GM12878 (cell line): ENCODE measurements at regions of chr17 and their contacts with region 1.

Region 1: GRCh38 chr17:34420254-34420766 is 57.3 kb upstream of the CCL1 start:
- DNase-seq: peak; percentile 11
- ATAC-seq: peak; percentile 82
- H3K4me3 ChIP-seq: no peak overlapping the region
- H3K27ac ChIP-seq: no peak overlapping the region
- H3K4me1 ChIP-seq: no peaks in the 10 kb centered on the region
- H3K27me3 ChIP-seq: peaks cover 5 to 10% of the 10 kb centered on the region in 2 experiments
- CTCF ChIP-seq: peak; percentile 88 to 94 (median 89)
- EP300 ChIP-seq: no peak
- POLR2A ChIP-seq: no peak
- RAD21 ChIP-seq: peak; percentile 91

Region 2: GRCh38 chr17:34051046-34051445 is 369.3 kb before region 1 on chr17:
- CTCF ChIA-PET with region 1: no interaction called
- POLR2A ChIA-PET with region 1: no interaction called
- RAD21 ChIA-PET with region 1: no interaction called
- SMC1A ChIA-PET with region 1: no interaction called
- in situ Hi-C with region 1: no loop called
- intact Hi-C with region 1: no loop called
- DNase-seq: no peak
- ATAC-seq: no peak
- H3K4me3 ChIP-seq: no peak overlapping the region
- H3K27ac ChIP-seq: no peak overlapping the region
- H3K4me1 ChIP-seq: no peaks in the 10 kb centered on the region
- H3K27me3 ChIP-seq: 0 out of 4 replicates have a peak, but pooled peaks cover 0 to under 1% of the 10 kb centered on the region in 2 experiments
- CTCF ChIP-seq: no peak
- EP300 ChIP-seq: no peak
- POLR2A ChIP-seq: no peak
- RAD21 ChIP-seq: no peak

Region 3: DNA sequence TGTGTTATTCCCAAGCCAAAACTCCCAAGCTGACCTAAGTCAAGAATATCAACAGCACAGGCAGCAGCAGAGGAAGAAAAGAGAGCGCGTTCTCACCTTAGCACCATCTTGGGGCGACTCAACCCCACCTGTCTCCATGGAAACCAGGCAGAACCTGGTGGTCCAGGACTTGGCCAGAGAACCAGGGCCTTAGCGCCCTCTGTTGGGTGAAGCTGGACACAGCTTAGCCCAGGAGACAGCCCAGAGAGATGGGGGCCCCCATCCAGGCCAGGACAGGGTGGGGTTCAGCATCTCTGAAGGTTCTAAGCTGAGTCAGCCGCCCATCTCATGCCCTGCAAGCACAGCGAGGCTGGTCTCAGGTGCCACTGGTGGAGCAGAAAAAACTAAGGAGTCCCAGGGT is 99.0 kb after region 1 on chr17:
- CTCF ChIA-PET with region 1: interaction called, 4 read pairs
- POLR2A ChIA-PET with region 1: no interaction called
- RAD21 ChIA-PET with region 1: interaction called, 4 read pairs
- SMC1A ChIA-PET with region 1: no interaction called
- in situ Hi-C with region 1: no loop called
- intact Hi-C with region 1: loop called (anchors 2 kb)
- DNase-seq: no peak
- ATAC-seq: peak; percentile 61; the same call in 2 of the 3 replicates
- H3K4me3 ChIP-seq: no peak overlapping the region
- H3K27ac ChIP-seq: no peak overlapping the region
- H3K4me1 ChIP-seq: no peaks in the 10 kb centered on the region
- H3K27me3 ChIP-seq: no peaks in the 10 kb centered on the region; a peak in 1 of 4 replicates
- CTCF ChIP-seq: peak; percentile 47 to 69 (median 51)
- EP300 ChIP-seq: no peak
- POLR2A ChIP-seq: no peak
- RAD21 ChIP-seq: peak; percentile 36; the same call in 1 of the 2 replicates

Region 4: GRCh38 chr17:34637548-34638525 is 217.5 kb after region 1 on chr17:
- CTCF ChIA-PET with region 1: interaction called, 3 read pairs
- POLR2A ChIA-PET with region 1: interaction called, 5 read pairs
- RAD21 ChIA-PET with region 1: no interaction called
- SMC1A ChIA-PET with region 1: no interaction called
- in situ Hi-C with region 1: loop called (anchors 5 kb)
- intact Hi-C with region 1: loop called (anchors 1 kb)
- DNase-seq: no peak
- ATAC-seq: peak; percentile 100
- H3K4me3 ChIP-seq: no peak overlapping the region
- H3K27ac ChIP-seq: no peak overlapping the region
- H3K4me1 ChIP-seq: no peaks in the 10 kb centered on the region
- H3K27me3 ChIP-seq: peaks cover 3 to 10% of the 10 kb centered on the region in 2 experiments; a peak in 3 of 4 replicates
- CTCF ChIP-seq: peak; percentile 78 to 86 (median 84)
- EP300 ChIP-seq: no peak
- POLR2A ChIP-seq: no peak
- RAD21 ChIP-seq: peak; percentile 53

Region 5: DNA sequence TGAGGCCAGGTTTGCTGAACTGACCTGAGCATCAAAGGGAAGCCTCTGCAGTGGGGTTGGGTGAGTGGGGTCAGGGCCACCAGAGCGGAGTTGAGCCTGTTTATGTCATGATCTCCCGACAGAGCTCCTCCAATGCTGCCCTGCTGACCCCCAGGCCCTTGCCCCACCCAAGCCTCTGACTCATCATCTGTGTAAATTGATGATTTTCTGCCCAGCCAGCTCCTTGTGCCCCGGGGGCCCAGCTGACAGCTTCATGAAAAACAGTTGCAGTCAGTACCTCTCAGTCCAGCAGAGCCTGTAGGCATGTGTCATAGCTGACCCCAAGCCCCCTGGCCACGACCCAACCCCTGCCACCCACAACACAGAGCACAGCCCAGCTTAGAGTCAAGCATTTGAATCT is 406.0 kb after region 1 on chr17:
- CTCF ChIA-PET with region 1: no interaction called
- POLR2A ChIA-PET with region 1: no interaction called
- RAD21 ChIA-PET with region 1: no interaction called
- SMC1A ChIA-PET with region 1: no interaction called
- in situ Hi-C with region 1: no loop called
- intact Hi-C with region 1: no loop called
- DNase-seq: no peak
- ATAC-seq: no peak
- H3K4me3 ChIP-seq: no peak overlapping the region
- H3K27ac ChIP-seq: no peak overlapping the region
- H3K4me1 ChIP-seq: no peaks in the 10 kb centered on the region
- H3K27me3 ChIP-seq: peaks cover 0 to 4% of the 10 kb centered on the region in 2 experiments; a peak in 1 of 4 replicates
- CTCF ChIP-seq: no peak
- EP300 ChIP-seq: no peak
- POLR2A ChIP-seq: no peak
- RAD21 ChIP-seq: no peak

Region 6: DNA sequence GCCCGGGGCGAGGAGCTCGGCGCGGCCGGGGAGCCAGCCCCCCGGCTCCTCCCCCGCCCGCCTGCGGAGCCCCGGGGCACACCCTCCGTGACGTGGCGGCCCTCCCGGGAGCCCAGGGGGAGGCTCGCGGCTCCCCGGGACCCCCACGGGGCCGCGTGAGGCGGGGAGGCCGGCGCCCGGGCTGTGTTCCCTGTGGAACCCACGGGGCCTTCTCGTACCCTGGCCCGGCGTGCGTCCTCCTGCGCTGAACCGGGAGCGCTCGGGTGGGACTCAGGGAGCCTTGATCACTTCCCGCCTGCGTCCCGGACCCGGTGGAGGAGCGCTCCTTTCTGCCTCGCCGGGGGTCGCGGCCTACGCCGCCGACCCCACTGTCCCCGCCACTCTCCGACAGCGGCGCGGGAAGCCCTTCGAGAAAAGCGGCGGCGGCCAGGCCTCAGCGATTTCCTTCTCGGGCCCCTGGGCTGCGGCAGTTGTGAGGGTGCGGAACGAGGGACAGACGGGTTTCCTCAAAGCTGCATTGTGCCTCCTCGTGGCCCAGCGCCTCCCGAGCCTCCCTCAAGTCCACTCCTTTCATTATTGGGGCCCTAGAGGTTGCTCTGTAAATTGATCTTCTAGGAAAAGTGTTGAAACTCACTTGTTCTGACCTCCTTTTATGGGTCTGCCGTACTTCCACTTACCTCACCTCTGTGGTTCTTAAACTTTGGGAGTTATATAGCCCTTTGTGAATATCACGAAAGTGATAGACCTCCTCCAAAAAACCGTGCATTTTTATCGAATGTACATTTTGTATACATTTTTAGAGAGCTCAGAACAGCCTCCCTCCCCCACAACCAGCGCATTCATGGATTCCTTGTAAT is 560.6 kb after region 1 on chr17:
- CTCF ChIA-PET with region 1: no interaction called
- POLR2A ChIA-PET with region 1: no interaction called
- RAD21 ChIA-PET with region 1: no interaction called
- SMC1A ChIA-PET with region 1: no interaction called
- in situ Hi-C with region 1: no loop called
- intact Hi-C with region 1: loop called (anchors 10 kb)
- DNase-seq: peak; percentile 27
- ATAC-seq: peak; percentile 89
- H3K4me3 ChIP-seq: peak overlapping the region; percentile 89
- H3K27ac ChIP-seq: peak overlapping the region; percentile 85
- H3K4me1 ChIP-seq: peaks cover 12% of the 10 kb centered on the region
- H3K27me3 ChIP-seq: no peaks in the 10 kb centered on the region
- CTCF ChIP-seq: peak; percentile 18 to 34 (median 26); a peak in 2 of 6 replicates
- EP300 ChIP-seq: no peak
- POLR2A ChIP-seq: peak; percentile 77
- RAD21 ChIP-seq: 0 out of 2 replicates have a peak, but pooled peaks have one; percentile 19